ENCODE measurements at regions of chr5 and their contacts with region 1.

Region 1: DNA sequence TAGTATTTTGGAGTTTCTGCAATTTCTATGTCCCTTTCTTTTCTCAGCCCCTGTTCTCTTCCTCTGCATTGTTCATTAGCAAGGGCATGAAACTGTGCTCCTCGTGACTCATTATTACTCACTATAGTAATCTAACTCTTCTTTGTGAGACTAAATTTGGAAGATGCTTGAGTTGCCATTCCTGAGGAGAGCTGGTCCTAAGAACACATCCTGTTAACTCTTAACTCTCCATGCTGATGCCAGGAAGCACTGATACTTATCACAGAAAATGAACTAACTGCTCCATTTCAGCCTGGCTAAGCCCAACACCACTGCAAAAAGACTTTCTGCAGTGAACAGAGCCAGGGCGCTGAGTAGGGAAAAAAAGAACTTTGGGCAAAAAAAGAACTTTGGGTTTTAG is 10.6 kb upstream of the CSNK1A1 start:
- DNase-seq: peak; percentile 95
- ATAC-seq: peak; percentile 79
- H3K4me3 ChIP-seq: peak overlapping the region; percentile 28 to 50
- H3K27ac ChIP-seq: peak overlapping the region; percentile 89
- H3K4me1 ChIP-seq: peaks cover 43 to 64% of the 10 kb centered on the region in 2 experiments
- H3K27me3 ChIP-seq: no peaks in the 10 kb centered on the region
- CTCF ChIP-seq: no peak
- POLR2A ChIP-seq: no peak
- RAD21 ChIP-seq: no peak

Region 2: GRCh38 chr5:149133795-149134780 is 427.8 kb before region 1 on chr5:
- CTCF ChIA-PET with region 1: no interaction called
- POLR2A ChIA-PET with region 1: no interaction called
- RAD21 ChIA-PET with region 1: no interaction called
- intact Hi-C with region 1: loop called (anchors 5 kb)
- DNase-seq: peak; percentile 89
- ATAC-seq: peak; percentile 89
- H3K4me3 ChIP-seq: 0 out of 4 replicates have a peak overlapping the region, but pooled peaks of 1 of the 2 experiments have one; percentile 20
- H3K27ac ChIP-seq: peak overlapping the region; percentile 21
- H3K4me1 ChIP-seq: peaks cover 9 to 27% of the 10 kb centered on the region in 2 experiments
- H3K27me3 ChIP-seq: no peaks in the 10 kb centered on the region
- CTCF ChIP-seq: no peak
- POLR2A ChIP-seq: no peak
- RAD21 ChIP-seq: no peak

Region 3: GRCh38 chr5:149317281-149318048 is 244.4 kb before region 1 on chr5:
- CTCF ChIA-PET with region 1: interaction called, 5 read pairs
- POLR2A ChIA-PET with region 1: interaction called, 3 read pairs
- RAD21 ChIA-PET with region 1: interaction called in 1 of 2 experiments, 3 read pairs
- intact Hi-C with region 1: loop called (anchors 2 kb)
- DNase-seq: peak; percentile 23
- ATAC-seq: peak; percentile 53
- H3K4me3 ChIP-seq: no peak overlapping the region
- H3K27ac ChIP-seq: no peak overlapping the region
- H3K4me1 ChIP-seq: peaks cover 11 to 22% of the 10 kb centered on the region in 2 experiments
- H3K27me3 ChIP-seq: no peaks in the 10 kb centered on the region
- CTCF ChIP-seq: peak; percentile 66 to 87 (median 72)
- POLR2A ChIP-seq: no peak
- RAD21 ChIP-seq: peak; percentile 87

Region 4: GRCh38 chr5:149381987-149382340 is 179.9 kb before region 1 on chr5:
- CTCF ChIA-PET with region 1: interaction called, 17 read pairs
- POLR2A ChIA-PET with region 1: no interaction called
- RAD21 ChIA-PET with region 1: no interaction called
- intact Hi-C with region 1: loop called (anchors 1 kb)
- DNase-seq: peak; percentile 33
- ATAC-seq: peak; percentile 97
- H3K4me3 ChIP-seq: no peak overlapping the region
- H3K27ac ChIP-seq: no peak overlapping the region
- H3K4me1 ChIP-seq: peaks cover 0 to 6% of the 10 kb centered on the region in 2 experiments; a peak in 2 of 4 replicates
- H3K27me3 ChIP-seq: no peaks in the 10 kb centered on the region
- CTCF ChIP-seq: peak; percentile 88 to 93 (median 90)
- POLR2A ChIP-seq: no peak
- RAD21 ChIP-seq: peak; percentile 96

Region 5: DNA sequence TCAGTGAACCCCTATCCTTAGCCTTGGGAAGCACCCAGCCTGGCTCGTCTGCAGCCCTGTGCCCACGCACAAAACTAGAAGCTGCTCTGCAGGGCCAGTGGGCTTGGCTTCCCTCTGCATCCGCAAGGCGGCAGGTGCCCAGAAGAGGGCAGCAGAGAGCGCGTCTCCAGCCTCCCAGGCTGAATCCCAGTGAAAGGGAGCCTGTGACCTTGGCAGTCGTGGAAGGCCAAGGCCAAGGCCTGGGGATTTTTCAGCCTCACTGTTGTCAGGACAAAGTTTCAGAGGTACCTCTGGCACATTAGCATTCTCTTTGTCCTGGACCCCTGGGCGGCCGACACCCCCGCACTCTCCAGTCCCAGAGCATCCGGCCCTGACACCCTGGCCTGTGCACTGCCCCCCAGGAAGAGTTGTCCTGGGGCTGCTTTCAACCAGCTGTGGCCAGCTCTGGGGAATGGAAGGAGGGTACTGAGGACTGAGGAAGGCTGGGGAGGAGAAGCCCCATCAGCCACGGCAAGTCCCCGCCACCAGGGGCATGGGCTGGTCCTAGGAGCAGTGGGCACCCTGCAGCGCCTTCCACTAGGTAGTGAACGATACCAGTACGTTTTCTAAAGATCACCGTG is 119.2 kb before region 1 on chr5:
- CTCF ChIA-PET with region 1: interaction called, 34 read pairs
- POLR2A ChIA-PET with region 1: interaction called, 32 read pairs
- RAD21 ChIA-PET with region 1: interaction called, 4 to 5 read pairs
- intact Hi-C with region 1: loop called (anchors 1 kb)
- DNase-seq: no peak
- ATAC-seq: peak; percentile 71
- H3K4me3 ChIP-seq: no peak overlapping the region
- H3K27ac ChIP-seq: no peak overlapping the region; the same call in 1 of the 2 replicates
- H3K4me1 ChIP-seq: peaks cover 41 to 77% of the 10 kb centered on the region in 2 experiments
- H3K27me3 ChIP-seq: no peaks in the 10 kb centered on the region
- CTCF ChIP-seq: peak in 2 of 3 experiments; percentile 90 to 91; a peak in 4 of 6 replicates
- POLR2A ChIP-seq: no peak
- RAD21 ChIP-seq: no peak

Region 6: DNA sequence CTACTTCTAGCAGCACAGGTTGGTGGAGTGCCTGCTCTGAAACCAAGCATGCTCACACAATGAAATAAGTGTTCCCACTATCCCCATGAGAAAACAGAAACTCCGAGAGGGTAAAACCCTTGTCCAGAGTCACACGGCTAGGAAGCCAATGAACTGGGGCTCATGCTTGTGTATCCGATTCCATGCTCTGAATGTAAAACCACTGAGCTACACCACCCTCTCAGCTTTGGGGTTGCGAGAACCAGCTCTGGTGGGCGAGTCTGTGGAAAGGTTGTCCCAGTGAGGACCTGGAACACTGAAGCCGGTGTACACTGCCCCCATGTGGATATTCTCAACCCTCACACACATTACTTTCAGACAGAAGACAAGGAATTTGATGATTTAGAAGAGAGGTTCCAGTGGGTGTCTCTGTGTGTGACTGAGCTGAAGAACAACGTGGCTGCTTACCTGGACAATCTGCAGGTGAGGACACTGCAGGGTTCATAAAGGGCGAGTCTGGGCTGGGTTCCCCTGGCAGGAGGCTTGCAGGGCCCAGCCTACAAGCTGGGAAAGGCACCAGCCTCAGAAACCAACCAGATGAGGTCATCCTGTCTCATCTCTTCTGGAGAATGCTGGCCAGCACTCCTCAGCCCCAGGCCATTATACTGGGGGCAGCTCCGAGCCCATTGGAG is 56.9 kb after region 1 on chr5:
- CTCF ChIA-PET with region 1: interaction called, 16 read pairs
- POLR2A ChIA-PET with region 1: no interaction called
- RAD21 ChIA-PET with region 1: interaction called in 1 of 2 experiments, 6 read pairs
- intact Hi-C with region 1: no loop called
- DNase-seq: peak; percentile 47
- ATAC-seq: peak; percentile 95
- H3K4me3 ChIP-seq: no peak overlapping the region
- H3K27ac ChIP-seq: no peak overlapping the region
- H3K4me1 ChIP-seq: peaks cover 2 to 24% of the 10 kb centered on the region in 2 experiments; a peak in 3 of 4 replicates
- H3K27me3 ChIP-seq: no peaks in the 10 kb centered on the region
- CTCF ChIP-seq: peak; percentile 72 to 90 (median 87)
- POLR2A ChIP-seq: no peak
- RAD21 ChIP-seq: peak; percentile 97